ENCODE measurements at regions of chr13 and their contacts with region 1.

Region 1: GRCh38 chr13:43905435-43906031 is 25.8 kb downstream of the LACC1 start:
- DNase-seq: peak; percentile 44 to 58 (median 54)
- H3K4me3 ChIP-seq: no peak overlapping the region
- H3K4me3 Mint-ChIP-seq: no peak overlapping the region
- H3K27ac ChIP-seq: no peak overlapping the region
- H3K27ac Mint-ChIP-seq: no peak overlapping the region
- H3K4me1 ChIP-seq: no peaks in the 10 kb centered on the region
- H3K4me1 Mint-ChIP-seq: peaks cover 0 to 2% (median 0%) of the 10 kb centered on the region in 4 donors
- H3K27me3 ChIP-seq: no peaks in the 10 kb centered on the region
- H3K27me3 Mint-ChIP-seq: peaks cover 5 to 15% of the 10 kb centered on the region in 2 donors

Region 2: GRCh38 chr13:44141725-44142539 is 236.4 kb after region 1 on chr13:
- CTCF ChIA-PET with region 1: no interaction called
- POLR2A ChIA-PET with region 1: no interaction called
- intact Hi-C with region 1: loop called (anchors 5 kb)
- DNase-seq: peak; percentile 87 to 94 (median 89)
- H3K4me3 ChIP-seq: peak overlapping the region; percentile 59 to 79
- H3K4me3 Mint-ChIP-seq: peak overlapping the region; percentile 90 to 98 (median 94)
- H3K27ac ChIP-seq: peak overlapping the region; percentile 83
- H3K27ac Mint-ChIP-seq: peak overlapping the region; percentile 76 to 97 (median 96)
- H3K4me1 ChIP-seq: peaks cover 14% of the 10 kb centered on the region
- H3K4me1 Mint-ChIP-seq: peaks cover 9 to 16% (median 13%) of the 10 kb centered on the region in 4 donors
- H3K27me3 ChIP-seq: no peaks in the 10 kb centered on the region
- H3K27me3 Mint-ChIP-seq: peaks cover 5 to 7% of the 10 kb centered on the region in 2 donors

Region 3: GRCh38 chr13:44274452-44275205 is 369.1 kb after region 1 on chr13:
- CTCF ChIA-PET with region 1: interaction called, 3 read pairs
- POLR2A ChIA-PET with region 1: no interaction called
- intact Hi-C with region 1: loop called (anchors 10 kb)
- DNase-seq: peak; percentile 73 to 83 (median 78)
- H3K4me3 ChIP-seq: peak overlapping the region; percentile 48
- H3K4me3 Mint-ChIP-seq: peak overlapping the region; percentile 61 to 89 (median 77)
- H3K27ac ChIP-seq: peak overlapping the region; percentile 45
- H3K27ac Mint-ChIP-seq: peak overlapping the region; percentile 80 to 98 (median 94)
- H3K4me1 ChIP-seq: peaks cover 24% of the 10 kb centered on the region
- H3K4me1 Mint-ChIP-seq: peaks cover 24 to 40% (median 27%) of the 10 kb centered on the region in 4 donors
- H3K27me3 ChIP-seq: no peaks in the 10 kb centered on the region
- H3K27me3 Mint-ChIP-seq: peaks cover 5 to 6% of the 10 kb centered on the region in 2 donors

Region 4: GRCh38 chr13:44465318-44465717 is 559.8 kb after region 1 on chr13:
- CTCF ChIA-PET with region 1: interaction called, 30 read pairs
- POLR2A ChIA-PET with region 1: no interaction called
- intact Hi-C with region 1: no loop called
- DNase-seq: no peak
- H3K4me3 ChIP-seq: no peak overlapping the region
- H3K4me3 Mint-ChIP-seq: no peak overlapping the region
- H3K27ac ChIP-seq: no peak overlapping the region
- H3K27ac Mint-ChIP-seq: no peak overlapping the region
- H3K4me1 ChIP-seq: no peaks in the 10 kb centered on the region
- H3K4me1 Mint-ChIP-seq: peaks cover 0 to 4% (median 1%) of the 10 kb centered on the region in 4 donors
- H3K27me3 ChIP-seq: no peaks in the 10 kb centered on the region
- H3K27me3 Mint-ChIP-seq: no peaks in the 10 kb centered on the region

Region 5: GRCh38 chr13:44969551-44970484 is 1064.3 kb after region 1 on chr13:
- CTCF ChIA-PET with region 1: interaction called, 3 read pairs
- POLR2A ChIA-PET with region 1: no interaction called
- intact Hi-C with region 1: loop called (anchors 1 kb)
- DNase-seq: peak in 4 of 5 donors; percentile 13 to 28 (median 18)
- H3K4me3 ChIP-seq: no peak overlapping the region
- H3K4me3 Mint-ChIP-seq: no peak overlapping the region
- H3K27ac ChIP-seq: no peak overlapping the region
- H3K27ac Mint-ChIP-seq: no peak overlapping the region
- H3K4me1 ChIP-seq: no peaks in the 10 kb centered on the region
- H3K4me1 Mint-ChIP-seq: peaks cover 0 to 1% (median under 1%) of the 10 kb centered on the region in 4 donors
- H3K27me3 ChIP-seq: no peaks in the 10 kb centered on the region
- H3K27me3 Mint-ChIP-seq: no peaks in the 10 kb centered on the region